ENCODE measurements at regions of chr11 and their contacts with region 1.

Region 1: GRCh38 chr11:100575870-100576705 is 111.0 kb upstream of the ARHGAP42 start:
- DNase-seq: peak in 1 of 3 donors; percentile 46
- ATAC-seq: peak; percentile 67
- H3K4me3 ChIP-seq: no peak overlapping the region
- H3K4me1 ChIP-seq: no peaks in the 10 kb centered on the region
- CTCF ChIP-seq: no peak

Region 2: DNA sequence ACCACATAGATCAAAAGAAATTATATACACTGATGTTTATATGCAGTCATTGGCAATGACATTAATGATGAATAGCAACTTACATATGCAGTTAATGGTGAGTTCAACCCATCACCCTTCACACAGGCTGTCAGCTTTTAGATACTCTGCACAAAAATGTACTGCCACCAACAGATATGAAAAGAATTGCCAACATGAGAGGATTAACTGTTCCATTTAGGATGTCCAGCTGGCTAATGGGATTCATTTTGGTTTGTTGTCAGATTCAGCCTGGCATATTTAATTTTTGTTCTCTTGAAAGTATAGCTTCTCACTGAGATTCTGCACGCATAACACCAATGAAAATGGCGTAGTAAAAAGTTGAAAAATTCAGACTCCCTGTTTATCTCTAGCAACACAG is 443.0 kb before region 1 on chr11:
- intact Hi-C with region 1: no loop called
- DNase-seq: no peak
- ATAC-seq: no peak
- H3K4me3 ChIP-seq: no peak overlapping the region
- H3K4me1 ChIP-seq: no peaks in the 10 kb centered on the region
- CTCF ChIP-seq: no peak

Region 3: GRCh38 chr11:100930185-100930778 is 354.2 kb after region 1 on chr11:
- intact Hi-C with region 1: loop called (anchors 5 kb)
- DNase-seq: no peak
- ATAC-seq: peak; percentile 54
- H3K4me3 ChIP-seq: no peak overlapping the region
- H3K4me1 ChIP-seq: no peaks in the 10 kb centered on the region
- CTCF ChIP-seq: peak; percentile 33